CD8-positive, alpha-beta T cell (primary cell): ENCODE measurements at regions of chr3 and their contacts with region 1.

Region 1: GRCh38 chr3:16884084-16884747 is 539 bp upstream of the PLCL2 start:
- DNase-seq: peak; percentile 46 to 82 (median 73)
- ATAC-seq: peak; percentile 49
- H3K4me3 ChIP-seq: peak overlapping the region; percentile 56 to 93
- H3K4me3 Mint-ChIP-seq: peak overlapping the region; percentile 95
- H3K27ac ChIP-seq: peak overlapping the region; percentile 62 to 70
- H3K27ac Mint-ChIP-seq: peak overlapping the region; percentile 97
- H3K4me1 ChIP-seq: peaks cover 16% of the 10 kb centered on the region
- H3K4me1 Mint-ChIP-seq: peaks cover 33% of the 10 kb centered on the region
- H3K27me3 ChIP-seq: no peaks in the 10 kb centered on the region
- H3K27me3 Mint-ChIP-seq: no peaks in the 10 kb centered on the region
- CTCF ChIP-seq: peak; percentile 24

Region 2: GRCh38 chr3:16618721-16619120 is 265.5 kb before region 1 on chr3:
- CTCF ChIA-PET with region 1: no interaction called
- POLR2A ChIA-PET with region 1: no interaction called
- intact Hi-C with region 1: no loop called
- DNase-seq: no peak
- ATAC-seq: no peak
- H3K4me3 ChIP-seq: no peak overlapping the region
- H3K4me3 Mint-ChIP-seq: no peak overlapping the region
- H3K27ac ChIP-seq: no peak overlapping the region
- H3K27ac Mint-ChIP-seq: no peak overlapping the region
- H3K4me1 ChIP-seq: no peaks in the 10 kb centered on the region
- H3K4me1 Mint-ChIP-seq: no peaks in the 10 kb centered on the region
- H3K27me3 ChIP-seq: no peaks in the 10 kb centered on the region
- H3K27me3 Mint-ChIP-seq: no peaks in the 10 kb centered on the region
- CTCF ChIP-seq: no peak

Region 3: GRCh38 chr3:16842272-16843270 is 41.6 kb before region 1 on chr3:
- CTCF ChIA-PET with region 1: interaction called, 22 read pairs
- POLR2A ChIA-PET with region 1: interaction called, 37 read pairs
- intact Hi-C with region 1: loop called (anchors 1 to 2 kb)
- DNase-seq: peak; percentile 48 to 91 (median 77)
- ATAC-seq: peak; percentile 90
- H3K4me3 ChIP-seq: peak overlapping the region; percentile 35 to 42
- H3K4me3 Mint-ChIP-seq: peak overlapping the region; percentile 80
- H3K27ac ChIP-seq: peak overlapping the region; percentile 63 to 89
- H3K27ac Mint-ChIP-seq: peak overlapping the region; percentile 98
- H3K4me1 ChIP-seq: peaks cover 60% of the 10 kb centered on the region
- H3K4me1 Mint-ChIP-seq: peaks cover 81% of the 10 kb centered on the region
- H3K27me3 ChIP-seq: no peaks in the 10 kb centered on the region
- H3K27me3 Mint-ChIP-seq: no peaks in the 10 kb centered on the region
- CTCF ChIP-seq: no peak

Region 4: DNA sequence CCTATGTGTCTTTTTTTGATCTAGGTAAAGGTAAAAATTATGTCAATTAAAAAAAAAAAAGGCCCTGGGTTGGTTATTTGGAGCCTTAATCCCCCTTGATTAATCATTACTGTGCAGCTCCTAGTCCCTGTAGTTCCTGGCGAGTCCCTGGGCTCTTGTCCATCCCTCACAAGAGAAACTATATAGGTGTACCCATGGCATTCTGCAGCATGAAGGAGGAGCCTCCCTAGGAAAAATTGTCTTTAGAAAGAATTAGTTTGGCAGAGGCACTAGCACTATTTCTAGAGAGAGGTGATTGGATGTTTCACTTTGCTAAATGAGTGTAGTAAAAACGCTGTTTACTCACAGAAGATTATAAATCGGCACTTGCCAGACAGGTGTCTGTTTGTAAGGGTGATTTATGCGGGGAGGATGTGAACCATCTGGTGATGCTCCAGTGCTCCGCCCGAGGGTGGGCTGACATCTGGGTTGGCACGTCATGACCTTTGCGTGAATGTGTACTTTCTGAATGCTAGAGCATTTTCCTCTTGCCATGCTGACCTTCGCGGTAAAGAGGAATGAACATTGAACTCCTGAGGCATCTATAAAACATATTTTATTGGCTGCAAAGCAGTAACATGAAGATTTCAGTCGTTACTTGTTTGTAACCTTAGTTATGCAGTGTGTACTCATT is 13.2 kb after region 1 on chr3:
- CTCF ChIA-PET with region 1: interaction called, 9 read pairs
- POLR2A ChIA-PET with region 1: interaction called, 19 read pairs
- intact Hi-C with region 1: loop called (anchors 1 to 2 kb)
- DNase-seq: peak in 5 of 9 experiments; percentile 48 to 76 (median 58)
- ATAC-seq: peak; percentile 85
- H3K4me3 ChIP-seq: no peak overlapping the region
- H3K4me3 Mint-ChIP-seq: peak overlapping the region; percentile 65
- H3K27ac ChIP-seq: peak overlapping the region in 1 of 2 experiments; percentile 18
- H3K27ac Mint-ChIP-seq: peak overlapping the region; percentile 80
- H3K4me1 ChIP-seq: peaks cover 89% of the 10 kb centered on the region
- H3K4me1 Mint-ChIP-seq: peaks cover 90% of the 10 kb centered on the region
- H3K27me3 ChIP-seq: no peaks in the 10 kb centered on the region
- H3K27me3 Mint-ChIP-seq: no peaks in the 10 kb centered on the region
- CTCF ChIP-seq: no peak

Region 5: DNA sequence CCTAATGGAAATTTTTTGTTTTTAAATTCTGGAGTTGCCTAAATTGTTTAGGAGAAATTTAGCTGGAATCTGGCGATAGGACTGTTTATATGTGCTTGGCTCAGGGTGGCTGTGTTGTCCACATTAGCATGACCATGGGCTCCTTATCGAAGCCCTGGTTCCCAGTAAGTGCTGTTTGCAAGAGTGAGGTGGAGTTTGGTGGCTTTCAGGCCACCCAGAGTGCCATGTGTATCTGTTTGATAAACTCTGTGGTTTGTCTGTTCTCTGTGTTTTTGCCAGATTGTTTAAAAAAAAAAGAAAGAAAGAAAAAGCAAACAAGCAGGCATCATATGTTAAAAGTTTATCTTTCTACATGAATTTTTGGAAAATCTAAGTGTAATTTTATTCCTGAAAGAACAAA is 52.0 kb after region 1 on chr3:
- CTCF ChIA-PET with region 1: no interaction called
- POLR2A ChIA-PET with region 1: no interaction called
- intact Hi-C with region 1: loop called (anchors 5 kb)
- DNase-seq: peak in 4 of 9 experiments; percentile 20 to 68 (median 48)
- ATAC-seq: peak; percentile 78
- H3K4me3 ChIP-seq: no peak overlapping the region
- H3K4me3 Mint-ChIP-seq: peak overlapping the region; percentile 74
- H3K27ac ChIP-seq: no peak overlapping the region
- H3K27ac Mint-ChIP-seq: peak overlapping the region; percentile 72
- H3K4me1 ChIP-seq: peaks cover 73% of the 10 kb centered on the region
- H3K4me1 Mint-ChIP-seq: peaks cover 92% of the 10 kb centered on the region
- H3K27me3 ChIP-seq: no peaks in the 10 kb centered on the region
- H3K27me3 Mint-ChIP-seq: no peaks in the 10 kb centered on the region
- CTCF ChIP-seq: no peak

Region 6: GRCh38 chr3:17151598-17152373 is 267.6 kb after region 1 on chr3:
- CTCF ChIA-PET with region 1: no interaction called
- POLR2A ChIA-PET with region 1: interaction called, 5 read pairs
- intact Hi-C with region 1: loop called in 1 of 2 experiments (anchors 1 kb)
- DNase-seq: peak; percentile 54 to 92 (median 76)
- ATAC-seq: peak; percentile 92
- H3K4me3 ChIP-seq: peak overlapping the region; percentile 9 to 12
- H3K4me3 Mint-ChIP-seq: peak overlapping the region; percentile 67
- H3K27ac ChIP-seq: peak overlapping the region; percentile 13 to 60
- H3K27ac Mint-ChIP-seq: peak overlapping the region; percentile 88
- H3K4me1 ChIP-seq: peaks cover 27% of the 10 kb centered on the region
- H3K4me1 Mint-ChIP-seq: peaks cover 45% of the 10 kb centered on the region
- H3K27me3 ChIP-seq: no peaks in the 10 kb centered on the region
- H3K27me3 Mint-ChIP-seq: no peaks in the 10 kb centered on the region
- CTCF ChIP-seq: no peak

Region 7: GRCh38 chr3:17742108-17742879 is 858.1 kb after region 1 on chr3 and contains the start of gene TBC1D5:
- CTCF ChIA-PET with region 1: no interaction called
- POLR2A ChIA-PET with region 1: no interaction called
- intact Hi-C with region 1: loop called in 1 of 2 experiments (anchors 10 kb)
- DNase-seq: peak; percentile 78 to 97 (median 88)
- ATAC-seq: peak; percentile 91
- H3K4me3 ChIP-seq: peak within 1 kb of the TSS; percentile 60 to 90
- H3K4me3 Mint-ChIP-seq: peak within 1 kb of the TSS; percentile 91
- H3K27ac ChIP-seq: peak within 1 kb of the TSS; percentile 82 to 87
- H3K27ac Mint-ChIP-seq: peak within 1 kb of the TSS; percentile 84
- H3K4me1 ChIP-seq: peaks cover 16% of the 10 kb centered on the region
- H3K4me1 Mint-ChIP-seq: peaks cover 39% of the 10 kb centered on the region
- H3K27me3 ChIP-seq: no peaks in the 10 kb centered on the region
- H3K27me3 Mint-ChIP-seq: no peaks in the 10 kb centered on the region
- CTCF ChIP-seq: no peak
- total RNA-seq, gene TBC1D5: 29.7 to 30.0 TPM